Heart left ventricle (tissue), 16 donors: ENCODE measurements at regions of chr1 and their contacts with region 1.

Region 1: DNA sequence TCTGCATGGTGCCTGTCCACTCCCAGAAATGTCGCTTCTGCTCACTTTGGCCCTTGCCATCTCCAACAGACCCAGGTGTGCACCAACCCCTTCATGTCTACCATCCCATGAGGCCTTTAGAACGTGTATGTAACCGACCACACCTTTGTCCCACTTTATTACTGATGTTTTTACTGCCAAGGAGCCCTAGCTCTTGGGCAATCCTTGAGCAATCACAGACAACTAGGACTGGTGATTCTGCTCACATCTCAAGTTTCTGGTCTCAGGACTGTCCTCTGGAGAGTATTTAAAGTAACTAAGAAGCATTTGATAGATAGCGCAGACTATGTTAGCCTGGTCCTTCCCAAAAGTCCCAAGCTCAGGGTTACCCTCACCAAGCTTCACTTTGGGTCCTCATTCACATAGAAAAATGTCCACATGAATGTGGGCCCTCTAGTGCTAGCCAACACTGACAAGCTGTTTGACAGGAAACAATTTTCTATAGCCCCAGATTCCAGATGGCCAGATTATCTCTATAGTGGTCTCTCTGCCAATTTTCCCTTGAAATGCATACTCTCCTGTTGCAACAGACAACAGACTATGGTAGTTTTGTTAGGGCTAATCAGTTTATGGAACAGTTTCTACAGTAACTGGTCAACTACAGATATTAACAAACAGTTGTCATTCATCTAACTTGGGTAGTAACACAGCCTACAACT is 6.9 kb upstream of the TMEM81 start:
- DNase-seq: no peak
- ATAC-seq: no peak
- H3K4me3 ChIP-seq: no peak overlapping the region
- H3K27ac ChIP-seq: no peak overlapping the region
- H3K4me1 ChIP-seq: no peaks in the 10 kb centered on the region
- H3K27me3 ChIP-seq: no peaks in the 10 kb centered on the region
- CTCF ChIP-seq: no peak
- POLR2A ChIP-seq: no peak

Region 2: DNA sequence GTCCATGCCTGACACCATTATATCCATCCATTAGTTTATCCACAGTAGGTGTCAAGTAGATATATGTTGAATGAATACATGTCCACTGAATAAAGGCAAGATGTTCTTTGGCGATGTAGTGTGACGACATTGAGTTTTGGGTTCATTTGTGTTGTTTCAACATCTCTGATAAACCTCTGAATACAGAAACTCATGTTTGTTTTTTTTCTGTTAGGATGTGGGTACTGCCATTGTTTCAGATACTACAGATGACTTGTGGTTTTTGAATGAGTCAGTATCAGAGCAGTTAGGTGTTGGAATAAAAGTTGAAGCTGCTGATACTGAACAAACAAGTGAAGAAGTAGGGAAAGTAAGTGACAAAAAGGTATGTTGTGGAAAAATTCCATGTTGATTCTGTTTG is 546.9 kb before region 1 on chr1:
- intact Hi-C with region 1: loop called in 1 of 10 experiments (anchors 10 kb)
- DNase-seq: no peak
- ATAC-seq: no peak
- H3K4me3 ChIP-seq: no peak overlapping the region
- H3K27ac ChIP-seq: peak overlapping the region in 1 of 12 donors; percentile 15
- H3K4me1 ChIP-seq: peaks cover 0 to 31% (median 0%) of the 10 kb centered on the region in 12 donors
- H3K27me3 ChIP-seq: no peaks in the 10 kb centered on the region
- CTCF ChIP-seq: no peak
- POLR2A ChIP-seq: no peak

Region 3: DNA sequence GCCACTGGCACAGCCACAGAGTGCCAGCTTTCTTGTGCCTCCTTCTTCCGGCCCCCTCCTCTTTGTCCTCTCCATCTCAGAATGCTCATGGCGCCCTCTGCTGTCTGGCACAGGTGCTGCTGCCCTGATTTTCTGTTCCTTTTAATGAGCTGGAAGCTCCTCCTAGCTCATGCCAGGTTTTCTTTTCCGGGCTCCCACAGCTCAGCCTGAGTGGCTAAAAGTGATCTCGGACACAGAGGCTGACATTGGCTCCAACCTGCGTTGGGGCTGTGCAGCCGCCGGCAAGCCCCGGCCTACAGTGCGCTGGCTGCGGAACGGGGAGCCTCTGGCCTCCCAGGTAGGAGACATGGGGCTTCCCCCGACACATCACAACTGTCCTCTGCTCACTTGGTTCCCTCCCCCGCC is 29.5 kb before region 1 on chr1:
- intact Hi-C with region 1: no loop called
- DNase-seq: peak in 4 of 5 donors; percentile 50 to 69 (median 64)
- ATAC-seq: peak in 3 of 4 donors; percentile 45 to 79 (median 64)
- H3K4me3 ChIP-seq: no peak overlapping the region
- H3K27ac ChIP-seq: no peak overlapping the region
- H3K4me1 ChIP-seq: peaks cover 0 to 8% (median 0%) of the 10 kb centered on the region in 12 donors
- H3K27me3 ChIP-seq: no peaks in the 10 kb centered on the region
- CTCF ChIP-seq: peak; percentile 71 to 90 (median 84)
- POLR2A ChIP-seq: no peak